Activated CD4-positive, alpha-beta T cell treated with anti-CD3 and anti-CD28 coated beads for 36 hours (primary cell): ENCODE measurements at regions of chr12 and their contacts with region 1.

Region 1: GRCh38 chr12:96219698-96220206 is 25.6 kb downstream of the ELK3 start:
- DNase-seq: peak; percentile 39
- ATAC-seq: peak; percentile 28
- H3K4me3 Mint-ChIP-seq: no peak overlapping the region
- H3K27ac Mint-ChIP-seq: no peak overlapping the region
- H3K4me1 Mint-ChIP-seq: peaks cover 38% of the 10 kb centered on the region
- H3K27me3 Mint-ChIP-seq: no peaks in the 10 kb centered on the region

Region 2: DNA sequence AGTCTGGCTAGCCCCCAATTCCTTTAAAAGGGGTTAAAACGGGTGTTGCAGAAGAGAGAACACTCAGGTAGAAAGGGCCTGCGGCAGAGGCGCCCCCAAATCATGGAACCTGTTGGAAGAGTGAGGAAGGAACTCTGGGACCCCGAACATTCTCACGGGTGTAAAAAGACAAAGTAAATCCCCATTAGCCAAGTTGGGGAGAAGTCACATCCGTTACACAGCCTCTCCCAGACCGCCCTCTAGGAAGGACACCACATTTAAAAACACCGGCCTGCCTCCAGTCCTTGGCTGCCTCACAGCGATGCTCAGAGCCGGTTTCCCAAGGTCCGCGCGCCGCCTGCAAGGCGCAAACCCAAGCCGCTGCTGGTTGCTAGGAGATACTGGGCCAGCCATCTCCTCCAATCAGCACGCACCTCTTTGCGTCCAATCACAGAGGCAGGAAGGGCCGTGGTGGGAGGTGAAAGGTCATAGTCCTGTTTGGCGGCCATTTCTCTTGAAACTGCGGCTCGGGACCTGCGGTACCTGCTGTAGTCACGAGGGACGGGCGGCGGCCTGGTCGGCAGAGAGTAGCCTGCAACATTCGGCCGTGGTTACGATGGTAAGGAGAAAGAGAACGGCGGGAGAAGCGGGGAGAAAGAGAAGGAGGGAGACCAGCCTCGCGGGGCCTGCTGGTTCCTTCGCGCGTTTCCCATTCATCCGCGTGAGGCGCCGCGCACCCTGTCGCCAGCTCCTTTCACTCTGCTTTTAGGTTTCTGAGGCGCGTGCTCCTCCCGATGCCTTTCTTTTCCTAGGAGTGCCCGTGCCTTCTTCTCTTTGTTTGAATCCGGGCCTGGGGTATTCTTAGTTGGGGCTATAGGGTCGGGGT is 361.0 kb before region 1 on chr12 and contains the start of gene SNRPF:
- CTCF ChIA-PET with region 1: interaction called, 5 read pairs
- POLR2A ChIA-PET with region 1: no interaction called
- intact Hi-C with region 1: loop called in 1 of 2 experiments (anchors 10 kb)
- DNase-seq: peak; percentile 95
- ATAC-seq: peak; percentile 95
- H3K4me3 Mint-ChIP-seq: no peak within 1 kb of the TSS
- H3K27ac Mint-ChIP-seq: peak within 1 kb of the TSS; percentile 59
- H3K4me1 Mint-ChIP-seq: peaks cover 28% of the 10 kb centered on the region
- H3K27me3 Mint-ChIP-seq: peaks cover 3% of the 10 kb centered on the region
- total RNA-seq, gene SNRPF: 23.1 to 61.1 TPM

Region 3: GRCh38 chr12:95998611-95999286 is 221.0 kb before region 1 on chr12:
- CTCF ChIA-PET with region 1: interaction called, 12 read pairs
- POLR2A ChIA-PET with region 1: no interaction called
- intact Hi-C with region 1: no loop called
- DNase-seq: peak; percentile 70
- ATAC-seq: peak; percentile 98
- H3K4me3 Mint-ChIP-seq: no peak overlapping the region
- H3K27ac Mint-ChIP-seq: peak overlapping the region; percentile 10
- H3K4me1 Mint-ChIP-seq: peaks cover 11% of the 10 kb centered on the region
- H3K27me3 Mint-ChIP-seq: no peaks in the 10 kb centered on the region

Region 4: DNA sequence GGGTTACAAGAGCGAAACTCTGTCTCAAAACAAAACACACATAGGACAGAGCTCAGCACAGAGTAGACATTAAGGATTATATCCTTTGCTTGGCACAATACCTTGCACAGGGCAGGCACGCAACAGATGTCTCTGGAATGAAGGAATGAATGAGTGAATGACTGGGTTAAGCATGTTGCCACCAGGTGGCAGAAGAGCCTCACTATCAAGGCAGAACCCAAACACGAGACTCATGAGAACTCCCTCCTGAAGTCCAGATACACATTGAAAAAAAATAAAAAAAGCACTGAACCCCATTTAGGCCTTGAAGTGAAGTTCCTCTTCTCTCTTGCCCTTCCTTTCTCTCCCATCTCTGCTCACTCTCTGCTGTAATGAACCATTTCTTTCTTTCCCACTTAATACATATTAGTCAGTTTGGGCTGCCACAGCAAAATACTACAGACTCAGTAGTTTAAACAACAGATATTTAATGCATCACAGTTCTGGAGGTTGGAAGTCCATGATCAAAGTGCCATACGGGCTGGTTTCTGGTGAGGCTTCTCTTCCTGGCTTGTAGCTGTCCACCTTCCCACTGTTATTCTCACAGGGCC is 157.8 kb before region 1 on chr12:
- CTCF ChIA-PET with region 1: interaction called, 52 read pairs
- POLR2A ChIA-PET with region 1: no interaction called
- intact Hi-C with region 1: loop called (anchors 1 kb)
- DNase-seq: peak; percentile 87
- ATAC-seq: peak; percentile 91
- H3K4me3 Mint-ChIP-seq: no peak overlapping the region
- H3K27ac Mint-ChIP-seq: peak overlapping the region; percentile 47
- H3K4me1 Mint-ChIP-seq: peaks cover 23% of the 10 kb centered on the region
- H3K27me3 Mint-ChIP-seq: no peaks in the 10 kb centered on the region

Region 5: DNA sequence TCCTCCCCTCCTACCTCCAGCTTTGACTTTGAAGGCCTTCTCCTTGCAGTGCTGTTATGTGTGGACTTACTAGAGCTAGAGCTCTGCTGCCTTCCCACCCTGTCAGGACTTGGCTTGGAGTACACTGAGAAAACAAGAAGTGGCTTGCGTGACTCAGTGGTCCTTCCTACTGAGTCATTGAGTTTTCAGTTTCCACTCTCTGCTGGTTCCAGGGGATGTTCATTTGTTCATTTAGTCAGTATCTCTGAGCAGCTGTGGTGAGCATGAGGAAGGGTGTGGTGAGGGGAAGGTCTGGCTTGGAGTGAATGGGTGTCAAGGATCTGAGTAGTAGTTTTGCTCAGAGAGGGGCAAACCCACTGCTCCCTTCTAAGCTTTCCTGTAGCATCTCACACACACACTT is 42.7 kb before region 1 on chr12:
- CTCF ChIA-PET with region 1: interaction called, 9 read pairs
- POLR2A ChIA-PET with region 1: no interaction called
- intact Hi-C with region 1: loop called in 1 of 2 experiments (anchors 2 kb)
- DNase-seq: peak; percentile 88
- ATAC-seq: peak; percentile 98
- H3K4me3 Mint-ChIP-seq: peak overlapping the region; percentile 18
- H3K27ac Mint-ChIP-seq: peak overlapping the region; percentile 83
- H3K4me1 Mint-ChIP-seq: peaks cover 25% of the 10 kb centered on the region
- H3K27me3 Mint-ChIP-seq: no peaks in the 10 kb centered on the region

Region 6: GRCh38 chr12:96237465-96238077 is 17.8 kb after region 1 on chr12:
- CTCF ChIA-PET with region 1: interaction called, 6 read pairs
- POLR2A ChIA-PET with region 1: interaction called, 10 read pairs
- intact Hi-C with region 1: no loop called
- DNase-seq: peak; percentile 72
- ATAC-seq: peak; percentile 54
- H3K4me3 Mint-ChIP-seq: peak overlapping the region; percentile 28
- H3K27ac Mint-ChIP-seq: peak overlapping the region; percentile 69
- H3K4me1 Mint-ChIP-seq: peaks cover 73% of the 10 kb centered on the region
- H3K27me3 Mint-ChIP-seq: no peaks in the 10 kb centered on the region